ENCODE measurements at regions of chr14 and their contacts with region 1.

Region 1: GRCh38 chr14:69107407-69108003 is 45.4 kb downstream of the DCAF5 start:
- DNase-seq: peak; percentile 61
- H3K4me3 ChIP-seq: no peak overlapping the region
- H3K27ac ChIP-seq: no peak overlapping the region
- H3K4me1 ChIP-seq: no peaks in the 10 kb centered on the region; a peak in 1 of 4 replicates
- H3K27me3 ChIP-seq: no peaks in the 10 kb centered on the region
- CTCF ChIP-seq: peak; percentile 81
- EP300 ChIP-seq: no peak
- RAD21 ChIP-seq: peak; percentile 92

Region 2: GRCh38 chr14:68874746-68875155 is 232.8 kb before region 1 on chr14:
- CTCF ChIA-PET with region 1: interaction called, 18 read pairs
- POLR2A ChIA-PET with region 1: no interaction called
- DNase-seq: no peak
- H3K4me3 ChIP-seq: no peak overlapping the region
- H3K27ac ChIP-seq: no peak overlapping the region
- H3K4me1 ChIP-seq: no peaks in the 10 kb centered on the region
- H3K27me3 ChIP-seq: no peaks in the 10 kb centered on the region
- CTCF ChIP-seq: no peak
- EP300 ChIP-seq: no peak
- RAD21 ChIP-seq: no peak

Region 3: GRCh38 chr14:68905107-68905895 is 202.2 kb before region 1 on chr14:
- CTCF ChIA-PET with region 1: interaction called, 90 read pairs
- POLR2A ChIA-PET with region 1: no interaction called
- DNase-seq: no peak
- H3K4me3 ChIP-seq: no peak overlapping the region
- H3K27ac ChIP-seq: no peak overlapping the region
- H3K4me1 ChIP-seq: no peaks in the 10 kb centered on the region
- H3K27me3 ChIP-seq: no peaks in the 10 kb centered on the region
- CTCF ChIP-seq: no peak
- EP300 ChIP-seq: no peak
- RAD21 ChIP-seq: no peak

Region 4: GRCh38 chr14:68977718-68978171 is 129.8 kb before region 1 on chr14:
- CTCF ChIA-PET with region 1: interaction called, 10 read pairs
- POLR2A ChIA-PET with region 1: no interaction called
- DNase-seq: peak; percentile 82
- H3K4me3 ChIP-seq: peak overlapping the region; percentile 87 to 96
- H3K27ac ChIP-seq: peak overlapping the region; percentile 98
- H3K4me1 ChIP-seq: peaks cover 30 to 51% of the 10 kb centered on the region in 2 experiments
- H3K27me3 ChIP-seq: no peaks in the 10 kb centered on the region
- CTCF ChIP-seq: peak; percentile 25
- EP300 ChIP-seq: peak; percentile 38 to 69; a peak in 3 of 4 replicates
- RAD21 ChIP-seq: peak; percentile 22; the same call in 1 of the 2 replicates

Region 5: GRCh38 chr14:69090187-69090789 is 17.2 kb before region 1 on chr14:
- CTCF ChIA-PET with region 1: interaction called, 31 read pairs
- POLR2A ChIA-PET with region 1: no interaction called
- DNase-seq: peak; percentile 32
- H3K4me3 ChIP-seq: no peak overlapping the region
- H3K27ac ChIP-seq: peak overlapping the region in 1 of 2 experiments; percentile 90; a peak in 2 of 4 replicates
- H3K4me1 ChIP-seq: peaks cover 22 to 29% of the 10 kb centered on the region in 2 experiments
- H3K27me3 ChIP-seq: no peaks in the 10 kb centered on the region
- CTCF ChIP-seq: peak; percentile 87
- EP300 ChIP-seq: no peak
- RAD21 ChIP-seq: peak; percentile 77

Region 6: GRCh38 chr14:69142101-69142500 is 34.6 kb after region 1 on chr14:
- CTCF ChIA-PET with region 1: no interaction called
- POLR2A ChIA-PET with region 1: no interaction called
- DNase-seq: no peak
- H3K4me3 ChIP-seq: no peak overlapping the region
- H3K27ac ChIP-seq: no peak overlapping the region
- H3K4me1 ChIP-seq: peaks cover 2 to 17% of the 10 kb centered on the region in 2 experiments; a peak in 2 of 4 replicates
- H3K27me3 ChIP-seq: no peaks in the 10 kb centered on the region
- CTCF ChIP-seq: no peak
- EP300 ChIP-seq: no peak
- RAD21 ChIP-seq: no peak

Measured in SK-N-SH (cell line).